ENCODE measurements at regions of chr4 and their contacts with region 1.

Region 1: DNA sequence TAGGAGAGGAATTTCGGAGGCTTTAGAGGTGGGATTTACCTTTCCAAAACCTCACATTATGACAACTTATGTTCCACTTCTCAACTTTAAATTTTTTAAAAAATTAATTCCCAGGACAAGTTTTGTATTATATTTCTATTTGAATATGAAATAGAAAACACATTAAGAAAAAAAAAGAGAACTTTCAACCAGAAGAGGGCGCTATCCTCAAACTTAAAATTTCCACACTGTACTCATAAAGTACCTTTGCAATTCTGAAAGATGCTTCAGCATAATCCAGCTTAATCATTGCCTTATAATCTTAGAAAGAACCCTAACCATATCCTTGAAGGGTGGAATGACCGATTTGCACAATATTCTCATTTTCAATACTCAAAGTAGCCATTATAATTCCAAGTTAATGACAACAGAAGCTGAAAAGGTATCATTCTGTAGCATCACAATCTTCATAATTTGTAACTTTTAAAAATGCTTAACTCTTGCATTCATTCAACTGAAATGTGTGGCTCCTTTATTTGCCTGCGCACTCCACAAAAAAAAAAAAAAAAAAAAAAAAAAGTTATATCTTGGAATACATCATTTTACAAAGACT is 158.0 kb downstream of the KCNIP4 start:
- DNase-seq: no peak
- ATAC-seq: no peak
- H3K4me3 ChIP-seq: no peak overlapping the region
- H3K27ac ChIP-seq: no peak overlapping the region
- H3K4me1 ChIP-seq: no peaks in the 10 kb centered on the region
- H3K27me3 ChIP-seq: no peaks in the 10 kb centered on the region
- CTCF ChIP-seq: peak in 1 of 5 experiments; percentile 43
- POLR2A ChIP-seq: no peak

Region 2: GRCh38 chr4:21802406-21802805 is 11.9 kb after region 1 on chr4:
- in situ Hi-C with region 1: no loop called
- intact Hi-C with region 1: no loop called
- DNase-seq: no peak
- ATAC-seq: no peak
- H3K4me3 ChIP-seq: no peak overlapping the region
- H3K27ac ChIP-seq: no peak overlapping the region
- H3K4me1 ChIP-seq: no peaks in the 10 kb centered on the region
- H3K27me3 ChIP-seq: no peaks in the 10 kb centered on the region
- CTCF ChIP-seq: no peak
- POLR2A ChIP-seq: no peak

Region 3: DNA sequence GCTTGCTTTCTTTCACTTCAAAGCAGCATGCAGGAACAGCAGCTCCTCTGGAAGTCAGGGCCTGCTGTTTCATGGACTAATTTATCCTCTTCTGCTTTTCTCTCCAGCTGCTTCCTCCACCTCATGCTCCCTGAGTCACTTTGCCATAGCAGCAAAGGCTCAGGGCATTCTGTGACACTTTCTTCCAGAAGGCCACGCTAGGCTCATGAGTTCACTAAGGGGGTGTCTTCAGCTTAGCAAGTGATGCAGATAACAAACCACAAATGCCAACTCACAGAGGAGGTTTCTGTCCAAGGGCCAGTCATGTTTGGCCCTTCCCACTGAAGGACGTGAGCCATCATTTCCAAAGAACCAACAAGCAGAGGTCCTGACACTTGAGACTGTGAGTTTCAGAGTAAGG is 525.1 kb after region 1 on chr4:
- in situ Hi-C with region 1: no loop called
- intact Hi-C with region 1: no loop called
- DNase-seq: no peak
- ATAC-seq: no peak
- H3K4me3 ChIP-seq: no peak overlapping the region
- H3K27ac ChIP-seq: no peak overlapping the region
- H3K4me1 ChIP-seq: no peaks in the 10 kb centered on the region
- H3K27me3 ChIP-seq: no peaks in the 10 kb centered on the region
- CTCF ChIP-seq: no peak
- POLR2A ChIP-seq: no peak

Region 4: DNA sequence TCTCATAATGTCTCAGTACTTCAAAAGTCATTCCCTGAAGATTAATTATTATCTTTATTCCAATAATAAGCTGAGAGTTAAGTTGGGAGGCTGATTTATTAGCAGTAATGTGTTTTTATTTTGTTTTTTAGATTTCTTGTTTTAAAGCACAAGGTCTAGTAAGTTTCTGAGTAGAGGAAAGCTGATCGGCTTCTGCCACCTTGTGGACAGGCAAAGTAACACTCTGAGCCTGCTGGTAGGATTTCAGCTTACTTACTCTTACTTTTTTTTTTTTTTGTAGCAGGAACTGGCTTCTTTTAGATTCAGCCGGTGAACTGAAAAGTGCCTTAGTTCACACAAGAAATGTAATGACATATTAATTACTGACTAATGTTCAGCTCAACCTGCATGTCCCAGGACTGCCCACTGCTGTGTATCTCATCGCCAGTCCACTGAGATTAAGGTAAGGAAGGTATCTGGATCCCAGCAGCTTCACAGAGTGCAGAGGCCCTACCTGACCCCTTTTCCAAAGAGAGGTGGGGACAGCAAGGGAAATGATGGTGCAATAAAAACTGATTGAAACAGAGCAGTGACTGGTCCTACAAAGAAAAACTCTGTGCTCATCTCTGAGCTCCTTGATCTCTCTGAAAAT is 598.8 kb after region 1 on chr4:
- in situ Hi-C with region 1: loop called (anchors 25 kb)
- intact Hi-C with region 1: loop called (anchors 1 kb)
- DNase-seq: no peak
- ATAC-seq: no peak
- H3K4me3 ChIP-seq: no peak overlapping the region
- H3K27ac ChIP-seq: no peak overlapping the region
- H3K4me1 ChIP-seq: peaks cover 6 to 20% of the 10 kb centered on the region in 2 donors
- H3K27me3 ChIP-seq: no peaks in the 10 kb centered on the region
- CTCF ChIP-seq: peak in 4 of 5 experiments; percentile 40 to 69 (median 50)
- POLR2A ChIP-seq: no peak

Region 5: GRCh38 chr4:22678940-22679854 is 888.7 kb after region 1 on chr4:
- in situ Hi-C with region 1: loop called in 1 of 4 experiments (anchors 25 kb)
- intact Hi-C with region 1: no loop called
- DNase-seq: peak in 1 of 2 donors; percentile 4
- ATAC-seq: peak; percentile 85 to 92
- H3K4me3 ChIP-seq: no peak overlapping the region
- H3K27ac ChIP-seq: peak overlapping the region; percentile 43 to 71 (median 50)
- H3K4me1 ChIP-seq: peaks cover 12 to 13% of the 10 kb centered on the region in 2 donors
- H3K27me3 ChIP-seq: no peaks in the 10 kb centered on the region
- CTCF ChIP-seq: no peak
- POLR2A ChIP-seq: no peak

Region 6: GRCh38 chr4:22688236-22688635 is 897.7 kb after region 1 on chr4:
- in situ Hi-C with region 1: loop called in 3 of 4 experiments (anchors 10 to 25 kb)
- intact Hi-C with region 1: loop called (anchors 2 kb)
- DNase-seq: no peak
- ATAC-seq: no peak
- H3K4me3 ChIP-seq: no peak overlapping the region
- H3K27ac ChIP-seq: no peak overlapping the region
- H3K4me1 ChIP-seq: no peaks in the 10 kb centered on the region
- H3K27me3 ChIP-seq: no peaks in the 10 kb centered on the region
- CTCF ChIP-seq: no peak
- POLR2A ChIP-seq: no peak

Region 7: DNA sequence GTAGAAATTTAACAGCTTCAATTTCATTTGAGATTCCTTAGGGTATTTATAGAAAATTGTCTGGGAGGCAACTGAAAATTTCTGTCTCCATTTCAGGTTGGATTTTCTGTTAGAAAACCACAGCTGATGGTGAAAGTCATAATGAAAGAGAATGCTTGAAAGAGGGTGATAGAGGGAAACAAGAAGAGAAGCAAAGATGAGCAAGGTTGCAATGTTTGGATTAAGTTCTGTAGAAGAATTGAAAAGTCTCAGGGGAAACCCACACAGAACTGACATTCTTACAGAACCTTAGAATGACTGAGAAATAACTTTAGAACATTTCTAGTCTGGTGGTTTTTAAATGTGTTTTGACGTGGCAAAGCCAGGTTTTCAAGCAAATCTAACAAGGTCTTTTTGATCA is 916.9 kb after region 1 on chr4:
- in situ Hi-C with region 1: loop called in 1 of 4 experiments (anchors 25 kb)
- intact Hi-C with region 1: no loop called
- DNase-seq: no peak
- ATAC-seq: no peak
- H3K4me3 ChIP-seq: no peak overlapping the region
- H3K27ac ChIP-seq: no peak overlapping the region
- H3K4me1 ChIP-seq: no peaks in the 10 kb centered on the region
- H3K27me3 ChIP-seq: no peaks in the 10 kb centered on the region
- CTCF ChIP-seq: no peak
- POLR2A ChIP-seq: no peak